Esophagus muscularis mucosa (tissue), 4 donors: ENCODE measurements at regions of chr15 and their contacts with region 1.

Region 1: GRCh38 chr15:45402162-45402954 is 24.0 kb upstream of the GATM start:
- DNase-seq: peak; percentile 97
- H3K4me3 ChIP-seq: peak overlapping the region; percentile 77 to 99 (median 92)
- H3K27ac ChIP-seq: peak overlapping the region; percentile 91 to 95 (median 94)
- H3K4me1 ChIP-seq: peaks cover 16 to 44% (median 33%) of the 10 kb centered on the region in 4 donors
- H3K27me3 ChIP-seq: peaks cover 0 to under 1% (median 0%) of the 10 kb centered on the region in 4 donors
- CTCF ChIP-seq: peak in 1 of 3 experiments; percentile 17
- EP300 ChIP-seq: no peak
- POLR2A ChIP-seq: peak; percentile 37

Region 2: DNA sequence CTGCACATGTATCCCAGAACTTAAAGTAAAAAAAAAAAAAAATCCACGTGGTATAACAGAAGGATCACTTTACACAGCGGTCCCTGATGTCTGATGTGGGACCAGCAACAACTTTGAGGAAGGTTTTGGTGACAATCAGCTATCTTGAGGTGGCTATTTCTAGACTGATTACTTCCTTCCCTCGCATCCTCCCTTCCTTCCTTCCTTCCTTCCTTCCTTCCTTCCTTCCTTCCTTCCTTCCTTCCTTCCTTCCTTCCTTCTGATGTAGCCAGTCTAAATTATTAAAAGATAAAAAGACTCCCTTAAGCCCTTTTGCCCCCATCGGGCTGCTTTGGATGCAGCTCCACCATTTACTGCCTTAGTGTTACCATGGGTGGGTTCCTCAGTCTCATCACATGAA is 364.4 kb before region 1 on chr15:
- intact Hi-C with region 1: no loop called
- DNase-seq: no peak
- H3K4me3 ChIP-seq: no peak overlapping the region
- H3K27ac ChIP-seq: no peak overlapping the region
- H3K4me1 ChIP-seq: peaks cover 0 to 11% (median 6%) of the 10 kb centered on the region in 4 donors
- H3K27me3 ChIP-seq: no peaks in the 10 kb centered on the region
- CTCF ChIP-seq: no peak
- EP300 ChIP-seq: no peak
- POLR2A ChIP-seq: no peak

Region 3: DNA sequence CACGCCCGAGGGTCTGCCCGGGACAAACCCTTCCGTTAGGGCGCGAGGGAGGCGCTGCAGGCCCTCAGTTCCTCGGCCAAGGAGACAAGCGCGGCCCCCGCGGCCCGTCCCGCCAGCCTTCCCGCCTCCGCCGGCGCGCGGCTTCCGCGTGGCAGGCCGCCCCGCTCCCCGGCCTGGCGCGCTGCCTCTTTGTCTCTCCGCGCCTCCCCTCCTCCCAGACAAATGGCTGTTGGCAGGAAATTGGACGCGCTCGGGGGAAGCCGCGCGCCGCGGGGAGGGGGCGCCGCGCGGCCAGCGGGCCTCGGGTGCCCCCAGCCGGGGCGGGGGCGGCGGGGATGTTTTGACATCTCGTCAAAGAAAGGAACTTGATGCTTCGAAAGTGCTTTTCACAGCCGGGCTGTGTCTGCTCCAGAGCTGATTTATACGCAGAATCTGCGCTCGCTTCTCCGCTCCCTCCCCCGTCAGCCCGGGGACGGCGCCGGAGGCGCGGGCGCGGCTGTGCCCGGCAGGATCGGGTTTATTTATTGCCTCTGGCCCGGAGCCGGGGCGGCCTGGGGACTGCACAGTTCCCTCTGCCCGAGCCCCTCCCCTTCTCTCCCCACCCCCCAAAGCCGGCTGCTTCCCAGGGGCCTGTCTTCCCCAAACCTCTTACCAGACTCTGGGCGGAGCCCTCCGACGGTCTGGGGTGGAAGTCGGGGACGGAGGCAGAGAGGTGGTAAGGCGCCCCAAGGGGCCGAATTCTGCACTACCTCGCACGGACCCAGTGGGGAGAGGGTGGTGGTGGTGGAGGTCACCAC is 235.3 kb before region 1 on chr15:
- intact Hi-C with region 1: loop called (anchors 2 kb)
- DNase-seq: peak; percentile 95
- H3K4me3 ChIP-seq: peak overlapping the region; percentile 69 to 87 (median 82)
- H3K27ac ChIP-seq: peak overlapping the region; percentile 98 to 100 (median 98)
- H3K4me1 ChIP-seq: peaks cover 17 to 47% (median 37%) of the 10 kb centered on the region in 4 donors
- H3K27me3 ChIP-seq: no peaks in the 10 kb centered on the region
- CTCF ChIP-seq: peak; percentile 30 to 78 (median 46)
- EP300 ChIP-seq: no peak
- POLR2A ChIP-seq: no peak

Region 4: DNA sequence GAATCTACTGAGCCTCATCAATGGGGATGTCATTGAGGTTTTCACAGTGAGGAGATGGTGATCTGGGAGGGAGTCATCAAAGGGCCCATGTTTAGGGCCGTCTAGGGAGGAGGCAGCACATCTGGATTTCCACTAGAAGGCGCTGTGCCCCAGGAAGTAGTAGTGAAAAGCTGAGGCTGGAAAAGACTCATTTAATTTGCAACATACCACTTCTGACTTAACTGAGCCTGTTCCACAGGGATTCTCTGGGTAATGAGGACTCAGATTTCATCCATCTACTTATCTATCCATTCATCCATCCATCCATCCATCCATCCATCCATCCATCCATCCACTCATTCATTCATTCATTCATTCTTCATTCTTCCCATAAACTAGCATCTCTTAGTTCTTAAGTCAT is 197.2 kb before region 1 on chr15:
- intact Hi-C with region 1: loop called (anchors 5 kb)
- DNase-seq: no peak
- H3K4me3 ChIP-seq: no peak overlapping the region
- H3K27ac ChIP-seq: no peak overlapping the region
- H3K4me1 ChIP-seq: peaks cover 0 to 9% (median 2%) of the 10 kb centered on the region in 4 donors
- H3K27me3 ChIP-seq: peaks cover 0 to under 1% (median 0%) of the 10 kb centered on the region in 4 donors
- CTCF ChIP-seq: peak; percentile 49 to 75 (median 57)
- EP300 ChIP-seq: no peak
- POLR2A ChIP-seq: no peak

Region 5: GRCh38 chr15:45307230-45307924 is 95.0 kb before region 1 on chr15:
- intact Hi-C with region 1: loop called (anchors 5 kb)
- DNase-seq: no peak
- H3K4me3 ChIP-seq: peak overlapping the region in 3 of 4 donors; percentile 17 to 28 (median 24)
- H3K27ac ChIP-seq: no peak overlapping the region
- H3K4me1 ChIP-seq: peaks cover 0 to 4% (median 2%) of the 10 kb centered on the region in 4 donors
- H3K27me3 ChIP-seq: no peaks in the 10 kb centered on the region
- CTCF ChIP-seq: peak; percentile 41 to 65 (median 47)
- EP300 ChIP-seq: no peak
- POLR2A ChIP-seq: no peak

Region 6: GRCh38 chr15:45384700-45385099 is 17.7 kb before region 1 on chr15:
- intact Hi-C with region 1: loop called (anchors 2 kb)
- DNase-seq: no peak
- H3K4me3 ChIP-seq: no peak overlapping the region
- H3K27ac ChIP-seq: no peak overlapping the region
- H3K4me1 ChIP-seq: peaks cover 0 to 9% (median 0%) of the 10 kb centered on the region in 4 donors
- H3K27me3 ChIP-seq: no peaks in the 10 kb centered on the region
- CTCF ChIP-seq: no peak
- EP300 ChIP-seq: no peak
- POLR2A ChIP-seq: no peak